Ovary (tissue), 10 donors: ENCODE measurements at regions of chr19 and their contacts with region 1.

Region 1: DNA sequence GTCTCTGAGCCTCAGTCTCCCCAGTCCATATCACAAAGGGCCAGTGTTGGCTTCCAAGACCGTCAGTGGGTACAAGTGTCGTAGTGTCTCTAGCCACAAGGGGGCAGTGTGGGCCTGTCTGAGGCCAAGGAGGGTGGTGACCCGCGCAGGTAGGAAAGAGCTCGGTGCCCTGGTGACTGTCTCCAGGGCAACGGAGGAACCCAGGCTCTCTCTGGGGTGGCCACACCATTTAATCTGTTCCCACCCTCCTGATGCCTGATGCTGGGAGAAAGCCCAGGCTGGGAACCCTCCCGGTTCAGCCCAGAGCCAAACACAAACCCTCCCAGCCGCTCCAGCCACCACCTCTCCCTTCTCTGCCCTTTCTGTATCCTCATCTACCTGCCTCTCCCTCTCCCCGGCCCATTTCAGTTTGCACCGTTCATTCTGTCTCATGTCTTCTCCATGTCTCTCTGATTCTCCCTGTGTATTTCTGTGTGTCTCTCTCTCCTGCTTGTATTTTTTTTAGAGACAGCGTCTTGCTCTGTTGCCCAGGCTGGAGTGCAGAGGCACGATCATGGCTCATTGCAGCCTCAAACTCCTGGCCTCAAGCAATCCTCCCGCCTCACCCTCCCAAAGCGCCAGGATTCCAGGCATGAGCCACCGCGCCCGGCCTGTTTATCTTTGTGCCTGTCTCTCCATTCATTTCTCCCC is 17.5 kb upstream of the MEIS3 start:
- DNase-seq: peak; percentile 52 to 75 (median 71)
- H3K4me3 ChIP-seq: no peak overlapping the region
- H3K27ac ChIP-seq: no peak overlapping the region
- H3K4me1 ChIP-seq: no peaks in the 10 kb centered on the region
- H3K27me3 ChIP-seq: no peaks in the 10 kb centered on the region
- CTCF ChIP-seq: peak; percentile 47 to 73 (median 68)
- EP300 ChIP-seq: no peak
- POLR2A ChIP-seq: no peak

Region 2: DNA sequence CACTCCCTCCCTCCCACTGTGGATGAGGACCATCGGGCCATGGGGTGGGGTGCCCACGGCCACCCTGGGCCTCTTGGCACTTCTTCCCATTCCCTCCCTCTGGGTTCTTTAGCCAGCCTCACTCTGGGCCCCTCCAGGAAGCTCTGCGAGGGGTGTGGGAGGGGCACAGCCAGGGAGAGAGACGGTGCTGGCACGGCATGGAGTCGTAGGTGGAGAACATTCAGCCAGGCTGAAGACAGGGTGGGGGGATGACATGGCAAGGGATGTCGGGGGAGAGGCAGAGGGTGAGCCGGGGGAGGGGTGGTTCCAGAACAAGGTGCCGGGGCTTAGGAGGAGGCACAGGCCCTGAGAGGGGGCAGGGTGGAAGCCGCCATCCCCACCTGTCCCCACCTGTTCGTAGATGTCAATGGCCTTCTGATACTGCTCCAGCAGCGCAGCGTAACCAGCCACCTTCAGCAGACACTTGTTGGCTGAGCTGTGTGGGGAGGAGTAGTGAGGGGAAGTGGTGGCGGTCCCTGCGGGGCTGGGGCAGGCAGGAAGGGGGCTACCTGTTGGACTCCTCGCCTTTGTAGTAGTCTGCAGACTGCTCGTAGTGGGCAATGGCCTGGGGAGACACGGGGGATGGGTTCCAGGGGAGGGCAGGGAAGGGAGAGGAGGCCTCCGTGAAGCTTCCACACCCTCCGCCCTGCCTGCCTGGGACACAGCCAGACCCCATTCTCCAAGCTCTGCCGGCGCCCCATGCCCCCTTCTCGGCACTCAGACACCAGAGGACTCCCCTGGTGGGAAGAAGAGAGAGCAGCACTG is 55.9 kb after region 1 on chr19:
- intact Hi-C with region 1: loop called in 1 of 4 experiments (anchors 2 kb)
- DNase-seq: no peak
- H3K4me3 ChIP-seq: no peak overlapping the region
- H3K27ac ChIP-seq: no peak overlapping the region
- H3K4me1 ChIP-seq: no peaks in the 10 kb centered on the region
- H3K27me3 ChIP-seq: no peaks in the 10 kb centered on the region
- CTCF ChIP-seq: no peak
- EP300 ChIP-seq: no peak
- POLR2A ChIP-seq: no peak